ENCODE measurements at regions of chr14 and their contacts with region 1.

Region 1: DNA sequence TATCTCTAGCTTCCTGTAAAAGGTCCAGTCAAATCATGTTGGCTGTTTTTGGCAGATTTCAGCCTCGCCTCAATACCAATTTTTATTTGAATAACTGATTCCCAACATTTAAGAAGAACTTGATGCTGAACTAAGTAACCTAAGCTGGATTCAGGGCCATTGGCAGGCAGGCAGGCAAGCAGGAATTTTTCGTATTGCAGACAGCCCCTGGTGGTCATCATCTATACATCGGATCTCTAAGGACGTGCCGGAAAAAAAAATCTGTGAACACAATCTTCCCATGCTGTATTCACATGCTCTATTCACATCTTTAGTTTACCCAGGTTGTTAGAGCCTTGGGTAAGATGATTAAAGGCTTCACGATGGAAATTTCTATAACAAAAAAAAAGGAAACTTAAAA is 7.0 kb downstream of the VCPKMT start:
- DNase-seq: no peak
- ATAC-seq: no peak
- H3K4me3 ChIP-seq: no peak overlapping the region
- H3K4me3 Mint-ChIP-seq: no peak overlapping the region
- H3K27ac ChIP-seq: no peak overlapping the region
- H3K27ac Mint-ChIP-seq: no peak overlapping the region
- H3K4me1 ChIP-seq: peaks cover under 1% of the 10 kb centered on the region
- H3K4me1 Mint-ChIP-seq: peaks cover 30% of the 10 kb centered on the region
- H3K27me3 ChIP-seq: no peaks in the 10 kb centered on the region
- H3K27me3 Mint-ChIP-seq: no peaks in the 10 kb centered on the region
- CTCF ChIP-seq: no peak

Region 2: GRCh38 chr14:49677643-49678042 is 431.7 kb before region 1 on chr14:
- CTCF ChIA-PET with region 1: no interaction called
- POLR2A ChIA-PET with region 1: no interaction called
- intact Hi-C with region 1: no loop called
- DNase-seq: peak in 1 of 14 experiments; percentile 18
- ATAC-seq: no peak
- H3K4me3 ChIP-seq: no peak overlapping the region
- H3K4me3 Mint-ChIP-seq: no peak overlapping the region
- H3K27ac ChIP-seq: no peak overlapping the region
- H3K27ac Mint-ChIP-seq: no peak overlapping the region
- H3K4me1 ChIP-seq: no peaks in the 10 kb centered on the region
- H3K4me1 Mint-ChIP-seq: no peaks in the 10 kb centered on the region
- H3K27me3 ChIP-seq: no peaks in the 10 kb centered on the region
- H3K27me3 Mint-ChIP-seq: no peaks in the 10 kb centered on the region
- CTCF ChIP-seq: no peak

Region 3: DNA sequence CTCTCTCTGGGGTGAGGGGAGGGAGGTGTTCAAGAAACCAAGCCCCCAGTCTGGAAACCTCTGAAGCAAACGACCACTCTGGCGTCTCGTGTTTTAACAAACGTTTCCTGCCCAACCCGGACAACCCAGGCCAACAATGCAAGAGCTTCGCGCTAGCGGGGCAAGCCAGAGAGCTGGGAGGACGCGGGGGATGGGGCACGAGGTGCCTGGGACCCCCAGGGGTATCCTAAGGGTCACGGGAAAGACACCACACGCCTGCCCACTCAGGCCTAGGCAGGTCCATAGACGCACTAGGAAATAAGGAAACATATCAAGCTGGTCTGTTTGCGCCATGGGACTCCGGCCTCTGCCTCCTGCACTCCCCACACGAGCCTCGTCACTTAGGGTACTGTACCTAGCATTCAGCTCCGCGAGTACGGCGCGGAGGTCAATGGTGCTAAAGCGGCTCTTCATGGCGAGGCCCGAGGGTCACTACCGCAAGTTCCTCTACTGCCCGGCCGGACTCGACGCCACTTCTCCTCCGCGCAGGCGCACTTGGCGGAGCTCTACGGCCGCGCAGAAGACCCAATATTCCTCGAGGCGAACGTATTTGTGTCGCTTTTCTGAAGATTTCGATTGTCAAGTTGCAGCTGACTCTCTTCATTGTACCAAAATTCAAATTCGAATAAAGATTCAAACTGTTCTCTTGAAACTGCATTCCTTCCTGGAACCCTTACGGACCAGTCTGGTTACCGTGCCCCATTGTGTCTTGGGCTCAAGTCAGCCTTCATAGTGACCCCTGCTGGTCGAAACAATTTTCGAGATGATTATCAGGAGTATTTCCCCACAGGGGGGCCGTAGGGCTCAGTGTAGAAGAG is 256.8 kb before region 1 on chr14 and contains the start of gene NEMF:
- CTCF ChIA-PET with region 1: interaction called, 8 read pairs
- POLR2A ChIA-PET with region 1: interaction called, 10 read pairs
- intact Hi-C with region 1: loop called (anchors 1 to 2 kb)
- DNase-seq: peak; percentile 67 to 91 (median 72)
- ATAC-seq: peak; percentile 75
- H3K4me3 ChIP-seq: peak within 1 kb of the TSS; percentile 97
- H3K4me3 Mint-ChIP-seq: peak within 1 kb of the TSS; percentile 99
- H3K27ac ChIP-seq: peak within 1 kb of the TSS; percentile 64 to 80
- H3K27ac Mint-ChIP-seq: peak within 1 kb of the TSS; percentile 91
- H3K4me1 ChIP-seq: peaks cover 17% of the 10 kb centered on the region
- H3K4me1 Mint-ChIP-seq: peaks cover 46% of the 10 kb centered on the region
- H3K27me3 ChIP-seq: no peaks in the 10 kb centered on the region
- H3K27me3 Mint-ChIP-seq: no peaks in the 10 kb centered on the region
- CTCF ChIP-seq: peak; percentile 89
- total RNA-seq, gene NEMF: 96.0 to 97.7 TPM

Region 4: GRCh38 chr14:49879683-49880204 is 229.6 kb before region 1 on chr14:
- CTCF ChIA-PET with region 1: interaction called, 9 read pairs
- POLR2A ChIA-PET with region 1: interaction called, 3 read pairs
- intact Hi-C with region 1: loop called in 1 of 2 experiments (anchors 1 kb)
- DNase-seq: peak; percentile 22 to 86 (median 38)
- ATAC-seq: peak; percentile 94
- H3K4me3 ChIP-seq: no peak overlapping the region
- H3K4me3 Mint-ChIP-seq: no peak overlapping the region
- H3K27ac ChIP-seq: no peak overlapping the region
- H3K27ac Mint-ChIP-seq: peak overlapping the region; percentile 64
- H3K4me1 ChIP-seq: peaks cover 17% of the 10 kb centered on the region
- H3K4me1 Mint-ChIP-seq: peaks cover 18% of the 10 kb centered on the region
- H3K27me3 ChIP-seq: no peaks in the 10 kb centered on the region
- H3K27me3 Mint-ChIP-seq: no peaks in the 10 kb centered on the region
- CTCF ChIP-seq: peak; percentile 46

Region 5: DNA sequence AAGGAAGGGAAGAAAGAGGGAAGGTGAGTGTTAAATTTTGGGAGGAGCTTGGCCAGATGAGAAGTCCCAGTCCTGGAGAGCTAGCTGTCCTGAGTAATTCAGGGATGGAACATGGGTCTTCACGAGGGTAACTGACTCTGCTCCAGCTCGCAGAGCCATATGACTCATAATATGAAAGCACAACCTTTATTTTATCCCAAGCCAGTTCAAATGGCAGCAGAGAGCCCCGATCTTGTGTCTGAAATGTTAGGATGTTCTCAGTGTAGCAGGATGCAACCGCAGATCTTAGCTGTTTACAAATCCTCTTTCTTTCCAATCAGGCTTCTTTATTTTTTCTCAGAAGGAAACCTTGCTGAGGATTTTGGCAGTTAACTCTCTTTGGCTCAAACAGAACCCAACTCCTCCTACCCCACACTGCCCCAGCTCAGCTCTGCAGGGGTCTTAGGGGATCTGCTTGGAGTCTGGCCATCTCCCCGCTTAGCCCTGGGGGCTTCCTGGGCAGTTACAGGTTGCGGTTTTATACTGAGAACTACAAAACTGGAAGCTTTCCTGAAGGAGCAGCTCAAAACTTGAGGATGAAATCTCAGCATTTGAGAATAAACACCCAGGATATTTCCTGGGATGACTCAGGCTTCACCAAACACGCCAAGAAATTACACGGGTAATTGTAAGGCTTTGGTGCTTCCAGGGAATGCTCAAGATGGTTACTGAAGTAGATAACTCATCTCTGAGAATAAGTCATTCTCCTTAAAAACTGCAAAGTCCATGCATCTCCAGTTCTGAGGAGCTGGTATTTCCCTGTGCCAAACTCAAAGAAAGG is 85.5 kb before region 1 on chr14:
- CTCF ChIA-PET with region 1: no interaction called
- POLR2A ChIA-PET with region 1: no interaction called
- intact Hi-C with region 1: no loop called
- DNase-seq: no peak
- ATAC-seq: no peak
- H3K4me3 ChIP-seq: no peak overlapping the region
- H3K4me3 Mint-ChIP-seq: no peak overlapping the region
- H3K27ac ChIP-seq: no peak overlapping the region
- H3K27ac Mint-ChIP-seq: no peak overlapping the region
- H3K4me1 ChIP-seq: peaks cover 15% of the 10 kb centered on the region
- H3K4me1 Mint-ChIP-seq: peaks cover 23% of the 10 kb centered on the region
- H3K27me3 ChIP-seq: no peaks in the 10 kb centered on the region
- H3K27me3 Mint-ChIP-seq: no peaks in the 10 kb centered on the region
- CTCF ChIP-seq: no peak

Region 6: DNA sequence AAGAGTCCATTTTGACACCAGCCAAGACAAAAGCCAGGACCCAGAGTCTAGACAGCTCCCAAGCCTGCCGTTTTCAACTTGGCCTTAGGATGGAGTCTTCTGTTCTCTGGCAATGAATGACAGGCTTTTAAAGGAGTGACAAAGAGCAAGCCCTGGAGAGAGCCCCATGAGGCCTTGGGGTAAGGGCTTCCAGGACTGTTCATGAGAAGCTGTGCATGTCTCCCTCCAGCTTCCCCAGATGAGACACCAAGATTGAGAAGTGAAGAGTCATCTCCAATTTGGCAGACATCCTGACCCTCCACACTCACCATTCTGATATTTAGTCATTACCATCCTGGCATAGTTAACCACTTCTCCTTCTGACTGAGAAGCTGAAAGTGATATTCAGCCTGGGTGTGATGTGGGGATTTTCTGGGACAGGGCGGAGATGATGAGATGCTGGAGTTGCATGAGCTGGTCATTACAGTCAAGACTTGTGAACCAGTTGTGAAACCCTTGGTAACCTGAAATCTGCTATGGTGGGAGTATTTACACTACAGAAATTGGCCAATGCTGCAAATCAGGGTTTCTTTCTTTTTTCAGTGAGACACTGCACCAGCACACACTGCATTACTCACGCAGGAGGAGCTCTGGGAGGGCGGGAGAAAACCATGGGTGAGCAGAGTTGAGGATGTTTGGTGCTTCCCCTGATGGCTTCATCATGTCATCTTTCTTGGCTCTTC is 70.8 kb before region 1 on chr14:
- CTCF ChIA-PET with region 1: no interaction called
- POLR2A ChIA-PET with region 1: interaction called, 3 read pairs
- intact Hi-C with region 1: loop called in 1 of 2 experiments (anchors 5 kb)
- DNase-seq: peak in 7 of 14 experiments; percentile 11 to 78 (median 49)
- ATAC-seq: peak; percentile 11
- H3K4me3 ChIP-seq: no peak overlapping the region
- H3K4me3 Mint-ChIP-seq: peak overlapping the region; percentile 65
- H3K27ac ChIP-seq: peak overlapping the region; percentile 8 to 66
- H3K27ac Mint-ChIP-seq: peak overlapping the region; percentile 55
- H3K4me1 ChIP-seq: peaks cover 62% of the 10 kb centered on the region
- H3K4me1 Mint-ChIP-seq: peaks cover 56% of the 10 kb centered on the region
- H3K27me3 ChIP-seq: no peaks in the 10 kb centered on the region
- H3K27me3 Mint-ChIP-seq: no peaks in the 10 kb centered on the region
- CTCF ChIP-seq: no peak

Region 7: GRCh38 chr14:50085570-50086320 is 23.6 kb before region 1 on chr14:
- CTCF ChIA-PET with region 1: interaction called, 10 read pairs
- POLR2A ChIA-PET with region 1: interaction called, 15 read pairs
- intact Hi-C with region 1: loop called in 1 of 2 experiments (anchors 2 kb)
- DNase-seq: peak in 4 of 14 experiments; percentile 28 to 65 (median 55)
- ATAC-seq: no peak
- H3K4me3 ChIP-seq: no peak overlapping the region
- H3K4me3 Mint-ChIP-seq: peak overlapping the region; percentile 65
- H3K27ac ChIP-seq: peak overlapping the region; percentile 96 to 97
- H3K27ac Mint-ChIP-seq: peak overlapping the region; percentile 93
- H3K4me1 ChIP-seq: peaks cover 80% of the 10 kb centered on the region
- H3K4me1 Mint-ChIP-seq: peaks cover 89% of the 10 kb centered on the region
- H3K27me3 ChIP-seq: no peaks in the 10 kb centered on the region
- H3K27me3 Mint-ChIP-seq: no peaks in the 10 kb centered on the region
- CTCF ChIP-seq: no peak